ENCODE measurements at regions of chr2 and their contacts with region 1.

Region 1: DNA sequence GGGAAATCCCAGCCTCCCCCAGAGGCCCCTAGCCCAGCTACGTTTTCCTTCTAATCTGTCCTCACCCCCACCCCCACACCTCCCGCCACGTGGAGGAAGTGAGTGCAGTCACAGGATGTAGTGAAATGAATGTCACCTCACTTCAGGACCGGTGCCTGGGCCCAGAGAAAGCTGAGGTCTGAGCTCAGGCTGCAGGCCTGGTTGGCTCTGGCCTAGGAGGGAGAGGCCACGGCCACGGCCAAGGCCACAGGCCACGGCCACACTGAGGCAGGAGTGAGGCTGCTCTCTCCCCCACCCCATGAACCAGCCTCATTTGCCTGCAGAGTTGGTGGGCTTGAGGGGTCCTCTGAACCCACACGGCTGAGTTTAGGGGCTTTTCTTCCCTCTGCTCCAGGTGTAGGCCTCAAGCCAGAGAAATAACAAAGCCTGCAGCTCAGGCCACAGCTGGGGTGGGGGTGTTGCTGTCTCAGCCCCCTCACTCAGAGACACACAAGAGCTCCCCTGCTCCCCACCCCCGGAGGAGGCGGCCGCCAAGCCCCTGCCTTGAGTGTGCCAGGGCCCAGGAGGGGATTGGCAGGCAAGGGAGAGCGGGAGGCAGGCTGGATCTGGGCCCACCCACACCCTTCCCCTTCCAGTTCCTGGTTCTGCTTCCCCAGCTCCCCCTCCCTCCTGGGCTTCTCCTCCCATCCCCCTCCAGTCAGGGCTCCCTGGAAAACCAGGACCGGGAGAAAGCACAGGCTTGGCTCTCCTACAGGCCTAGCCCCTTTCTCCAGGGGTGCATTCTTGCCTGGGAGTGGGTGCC is 27.0 kb downstream of the DNMT3A start:
- DNase-seq: peak; percentile 50 to 76 (median 58)
- H3K4me3 ChIP-seq: peak overlapping the region; percentile 74
- H3K4me3 Mint-ChIP-seq: peak overlapping the region; percentile 76 to 87 (median 79)
- H3K27ac ChIP-seq: peak overlapping the region; percentile 44
- H3K27ac Mint-ChIP-seq: peak overlapping the region; percentile 86 to 95 (median 90)
- H3K4me1 ChIP-seq: peaks cover 64% of the 10 kb centered on the region
- H3K4me1 Mint-ChIP-seq: peaks cover 49 to 74% (median 51%) of the 10 kb centered on the region in 3 donors
- H3K27me3 ChIP-seq: no peaks in the 10 kb centered on the region
- H3K27me3 Mint-ChIP-seq: no peaks in the 10 kb centered on the region

Region 2: GRCh38 chr2:24792874-24793760 is 521.6 kb before region 1 on chr2 and contains the starts of genes CENPO and PTRHD1:
- CTCF ChIA-PET with region 1: no interaction called
- POLR2A ChIA-PET with region 1: no interaction called
- DNase-seq: peak; percentile 91 to 98 (median 96)
- H3K4me3 ChIP-seq: peak within 1 kb of the TSS; percentile 81
- H3K4me3 Mint-ChIP-seq: peak within 1 kb of the TSS; percentile 97 to 100 (median 99)
- H3K27ac ChIP-seq: peak within 1 kb of the TSS; percentile 90
- H3K27ac Mint-ChIP-seq: peak within 1 kb of the TSS; percentile 98 to 100 (median 99)
- H3K4me1 ChIP-seq: peaks cover 7% of the 10 kb centered on the region
- H3K4me1 Mint-ChIP-seq: peaks cover 17 to 24% (median 24%) of the 10 kb centered on the region in 3 donors
- H3K27me3 ChIP-seq: no peaks in the 10 kb centered on the region
- H3K27me3 Mint-ChIP-seq: no peaks in the 10 kb centered on the region
- total RNA-seq, gene CENPO: 43.0 to 51.7 TPM
- total RNA-seq, gene PTRHD1: 24.7 to 29.2 TPM

Region 3: GRCh38 chr2:25342372-25343186 is 27.9 kb after region 1 on chr2:
- CTCF ChIA-PET with region 1: interaction called, 10 read pairs
- POLR2A ChIA-PET with region 1: interaction called, 3 read pairs
- DNase-seq: peak; percentile 70 to 87 (median 81)
- H3K4me3 ChIP-seq: peak overlapping the region; percentile 20
- H3K4me3 Mint-ChIP-seq: peak overlapping the region; percentile 71 to 91 (median 77)
- H3K27ac ChIP-seq: no peak overlapping the region
- H3K27ac Mint-ChIP-seq: peak overlapping the region in 4 of 8 donors; percentile 12 to 81 (median 42)
- H3K4me1 ChIP-seq: peaks cover 23% of the 10 kb centered on the region
- H3K4me1 Mint-ChIP-seq: peaks cover 23 to 33% (median 27%) of the 10 kb centered on the region in 3 donors
- H3K27me3 ChIP-seq: no peaks in the 10 kb centered on the region
- H3K27me3 Mint-ChIP-seq: peaks cover 0 to 1% of the 10 kb centered on the region in 2 donors

Region 4: GRCh38 chr2:25376750-25377621 is 62.3 kb after region 1 on chr2:
- CTCF ChIA-PET with region 1: interaction called, 11 read pairs
- POLR2A ChIA-PET with region 1: no interaction called
- DNase-seq: peak; percentile 89 to 97 (median 93)
- H3K4me3 ChIP-seq: peak overlapping the region; percentile 49
- H3K4me3 Mint-ChIP-seq: peak overlapping the region; percentile 9 to 93 (median 81)
- H3K27ac ChIP-seq: peak overlapping the region; percentile 63
- H3K27ac Mint-ChIP-seq: peak overlapping the region; percentile 60 to 95 (median 91)
- H3K4me1 ChIP-seq: peaks cover 36% of the 10 kb centered on the region
- H3K4me1 Mint-ChIP-seq: peaks cover 22 to 37% (median 35%) of the 10 kb centered on the region in 3 donors
- H3K27me3 ChIP-seq: no peaks in the 10 kb centered on the region
- H3K27me3 Mint-ChIP-seq: peaks cover 0 to 3% of the 10 kb centered on the region in 2 donors